Dorsolateral prefrontal cortex (tissue), 120 donors: ENCODE measurements at regions of chr13 and their contacts with region 1.

Region 1: GRCh38 chr13:28138012-28138755 is at the start of gene PAN3:
- DNase-seq: peak; percentile 83 to 94 (median 88)
- H3K4me3 ChIP-seq: peak within 1 kb of the TSS; percentile 69 to 99 (median 92)
- H3K27ac ChIP-seq: peak within 1 kb of the TSS; percentile 76 to 99 (median 97)
- H3K27me3 ChIP-seq: no peaks in the 10 kb centered on the region
- CTCF ChIP-seq: peak in 31 of 56 donors; percentile 6 to 52 (median 25)
- total RNA-seq, gene PAN3: 24.5 to 43.6 (median 33.5) TPM

Region 2: GRCh38 chr13:27620377-27621115 is 517.6 kb before region 1 on chr13 and contains the start of gene LNX2:
- intact Hi-C with region 1: loop called (anchors 1 to 10 kb)
- DNase-seq: peak; percentile 95 to 100 (median 98)
- H3K4me3 ChIP-seq: peak within 1 kb of the TSS; percentile 74 to 99 (median 88)
- H3K27ac ChIP-seq: peak within 1 kb of the TSS; percentile 41 to 96 (median 89)
- H3K27me3 ChIP-seq: no peaks in the 10 kb centered on the region
- CTCF ChIP-seq: peak in 21 of 56 donors; percentile 0 to 53 (median 15)
- total RNA-seq, gene LNX2: 3.0 to 8.1 (median 5.5) TPM

Region 3: DNA sequence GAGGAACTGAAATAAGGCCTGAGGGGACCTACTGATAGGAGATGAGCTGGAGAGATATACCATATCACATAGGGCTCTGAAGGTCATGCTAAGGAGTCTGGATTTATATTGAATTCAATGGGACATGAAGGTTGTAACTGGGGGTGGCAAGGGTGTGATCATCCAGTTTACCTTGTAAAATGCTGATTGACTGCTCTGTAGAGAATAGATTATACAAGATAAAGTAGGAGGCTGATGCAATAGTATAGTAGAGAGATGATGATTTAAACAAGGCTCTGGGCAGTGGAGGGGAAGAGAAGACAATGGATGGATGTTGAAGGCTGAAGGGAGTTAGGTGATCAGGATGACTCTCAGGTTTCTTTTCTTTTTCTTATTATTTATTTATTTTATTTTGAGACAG is 17.9 kb before region 1 on chr13:
- intact Hi-C with region 1: loop called in 1 of 2 experiments (anchors 1 kb)
- DNase-seq: no peak
- H3K4me3 ChIP-seq: no peak overlapping the region
- H3K27ac ChIP-seq: no peak overlapping the region
- H3K27me3 ChIP-seq: peaks cover 0 to 6% (median 0%) of the 10 kb centered on the region in 45 donors
- CTCF ChIP-seq: no peak

Region 4: DNA sequence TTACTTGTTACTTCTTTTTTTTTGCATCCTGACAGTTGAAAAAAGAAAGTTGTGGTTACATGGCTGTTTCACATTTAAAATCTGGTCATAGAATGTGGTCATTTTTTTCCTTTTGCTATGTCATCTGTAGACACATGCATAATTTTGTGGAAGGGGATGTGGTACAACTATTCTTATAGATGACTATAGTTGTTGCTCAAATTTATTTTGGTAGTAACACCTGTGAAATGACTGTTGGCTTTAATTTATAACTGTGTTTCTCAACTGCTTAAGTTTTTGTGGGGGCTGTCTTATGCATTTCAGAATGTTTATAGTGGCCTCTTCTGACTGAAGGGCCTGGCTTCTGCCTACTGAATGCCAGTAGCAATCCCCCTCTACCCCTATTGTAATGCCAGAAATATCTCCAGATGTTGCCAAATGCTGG is 130.6 kb after region 1 on chr13:
- intact Hi-C with region 1: no loop called
- DNase-seq: no peak
- H3K4me3 ChIP-seq: no peak overlapping the region
- H3K27ac ChIP-seq: no peak overlapping the region
- H3K27me3 ChIP-seq: no peaks in the 10 kb centered on the region
- CTCF ChIP-seq: no peak

Region 5: DNA sequence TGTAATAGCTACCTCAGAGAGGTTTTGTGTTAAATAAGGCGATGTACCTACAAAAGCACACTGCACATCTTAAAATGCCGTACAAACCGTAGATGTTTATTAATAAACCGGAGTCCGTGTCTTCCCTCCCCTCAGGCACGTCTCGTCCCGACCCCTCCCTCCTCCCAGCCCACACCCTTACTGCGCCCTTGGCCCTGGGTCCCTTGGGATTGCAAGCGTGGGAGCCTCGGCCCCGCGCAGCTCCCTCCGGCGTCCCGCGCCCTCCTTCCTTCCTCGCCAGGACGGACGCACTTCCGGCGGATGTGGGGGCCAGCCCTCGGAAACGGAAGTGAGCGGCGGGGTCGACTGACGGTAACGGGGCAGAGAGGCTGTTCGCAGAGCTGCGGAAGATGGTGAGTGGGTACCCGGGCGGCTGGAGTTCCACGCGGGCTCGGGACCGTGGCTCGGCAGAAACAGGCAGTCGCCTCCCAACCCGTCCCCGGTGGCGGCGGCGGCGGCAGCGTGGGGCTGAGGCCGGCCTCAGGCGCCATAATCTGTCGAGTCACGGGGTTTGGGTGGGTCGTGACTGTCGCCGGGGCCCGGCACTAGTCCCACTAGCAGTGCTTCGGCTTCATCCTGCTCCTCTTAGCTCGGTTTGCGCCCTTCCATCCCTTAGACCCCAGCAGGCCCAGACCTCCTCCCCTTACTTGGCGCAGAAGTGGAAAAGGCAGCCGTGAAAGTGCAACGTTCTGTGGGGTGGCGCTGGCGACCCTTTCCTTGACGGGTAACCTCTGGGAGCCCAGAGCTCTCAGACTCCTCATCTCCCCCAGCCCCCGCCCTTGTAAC is 520.8 kb after region 1 on chr13 and contains the start of gene POMP:
- intact Hi-C with region 1: loop called in 1 of 2 experiments (anchors 5 kb)
- DNase-seq: peak; percentile 84 to 98 (median 90)
- H3K4me3 ChIP-seq: peak within 1 kb of the TSS; percentile 58 to 100 (median 92)
- H3K27ac ChIP-seq: peak within 1 kb of the TSS; percentile 20 to 98 (median 90)
- H3K27me3 ChIP-seq: no peaks in the 10 kb centered on the region
- CTCF ChIP-seq: peak in 12 of 56 donors; percentile 1 to 38 (median 17)
- total RNA-seq, gene POMP: 39.7 to 71.0 (median 58.2) TPM

Region 6: DNA sequence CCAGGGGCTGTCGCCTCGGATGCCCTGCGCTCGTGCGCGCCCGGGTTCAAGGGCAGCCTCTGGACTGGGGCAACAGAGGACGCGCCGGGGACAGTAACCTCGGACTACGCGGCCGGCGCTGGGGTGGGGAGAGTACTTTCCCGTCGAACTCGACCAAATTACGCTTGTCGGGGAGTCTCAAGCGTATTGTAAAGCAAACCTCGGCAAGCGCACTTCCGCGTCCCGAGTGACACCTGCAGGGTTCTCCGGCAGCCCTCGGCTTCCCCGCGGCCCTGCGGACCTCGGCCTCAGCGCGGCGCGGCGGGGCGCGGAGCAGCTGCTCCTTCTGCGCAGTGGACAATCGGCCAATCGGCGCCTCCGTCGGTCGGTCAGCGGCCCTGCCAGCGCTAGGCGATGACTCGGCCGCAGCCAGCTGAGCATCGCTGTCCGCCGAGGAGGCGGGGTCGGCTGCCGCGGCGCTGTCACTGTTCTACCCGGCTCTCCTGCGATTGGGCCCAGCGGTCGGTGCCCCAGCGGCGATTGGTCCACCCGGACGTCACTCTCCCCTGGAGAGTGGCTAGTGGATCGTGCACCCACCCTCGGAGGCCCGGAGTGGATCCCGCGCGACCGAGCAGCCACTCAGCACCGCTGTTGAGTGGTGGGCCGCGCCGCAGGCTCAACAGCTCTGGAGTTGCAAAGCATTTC is 580.5 kb after region 1 on chr13 and contains the start of gene SLC46A3:
- intact Hi-C with region 1: loop called in 1 of 2 experiments (anchors 5 kb)
- DNase-seq: peak; percentile 98 to 99 (median 99)
- H3K4me3 ChIP-seq: peak within 1 kb of the TSS; percentile 54 to 98 (median 87)
- H3K27ac ChIP-seq: peak within 1 kb of the TSS; percentile 75 to 99 (median 97)
- H3K27me3 ChIP-seq: no peaks in the 10 kb centered on the region
- CTCF ChIP-seq: peak in 44 of 56 donors; percentile 5 to 63 (median 31)
- total RNA-seq, gene SLC46A3: 8.6 to 20.2 (median 13.7) TPM